ENCODE measurements at regions of chr11 and their contacts with region 1.

Region 1: DNA sequence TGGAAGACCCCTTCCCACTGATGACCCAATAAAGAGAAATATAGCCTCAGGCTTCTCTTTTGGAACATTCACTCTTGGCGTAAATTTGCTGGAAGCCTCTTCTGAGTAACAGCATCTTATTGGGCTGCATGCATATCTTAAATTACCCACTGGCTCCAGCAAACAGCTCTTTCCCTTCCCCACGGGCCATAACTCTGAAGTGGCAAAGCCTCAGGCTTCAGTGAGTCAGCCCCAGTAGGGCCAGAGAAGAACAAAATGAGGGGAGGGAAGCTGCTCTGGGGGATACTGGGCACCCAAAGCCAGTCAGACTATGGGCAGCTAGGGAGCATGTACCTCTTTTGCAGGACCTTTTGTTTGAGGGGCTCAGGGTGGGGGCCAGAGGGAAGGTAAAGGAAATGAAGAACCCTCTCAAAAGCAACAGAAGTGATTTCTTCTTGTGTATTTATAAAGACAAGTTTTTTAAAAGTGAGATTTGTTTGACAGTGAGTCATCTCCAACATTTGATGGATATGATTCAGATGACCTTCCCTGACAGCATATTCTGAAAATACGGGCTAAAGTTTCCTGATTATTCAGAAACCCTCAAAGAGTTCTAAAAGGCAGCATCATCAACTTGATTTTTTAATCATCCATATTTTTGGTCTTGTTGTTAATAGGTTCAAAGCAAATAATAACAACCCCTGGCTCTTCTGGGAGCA is 203.4 kb downstream of the KIF18A start:
- DNase-seq: no peak
- H3K4me3 ChIP-seq: no peak overlapping the region
- H3K27ac ChIP-seq: no peak overlapping the region
- H3K27me3 ChIP-seq: peaks cover 0 to 16% (median 0%) of the 10 kb centered on the region in 45 donors
- CTCF ChIP-seq: no peak

Region 2: GRCh38 chr11:27563201-27563600 is 341.3 kb before region 1 on chr11:
- intact Hi-C with region 1: no loop called
- DNase-seq: no peak
- H3K4me3 ChIP-seq: no peak overlapping the region
- H3K27ac ChIP-seq: no peak overlapping the region
- H3K27me3 ChIP-seq: no peaks in the 10 kb centered on the region
- CTCF ChIP-seq: no peak

Region 3: GRCh38 chr11:27807594-27807993 is 96.9 kb before region 1 on chr11:
- intact Hi-C with region 1: no loop called
- DNase-seq: no peak
- H3K4me3 ChIP-seq: no peak overlapping the region
- H3K27ac ChIP-seq: no peak overlapping the region
- H3K27me3 ChIP-seq: no peaks in the 10 kb centered on the region
- CTCF ChIP-seq: no peak

Region 4: DNA sequence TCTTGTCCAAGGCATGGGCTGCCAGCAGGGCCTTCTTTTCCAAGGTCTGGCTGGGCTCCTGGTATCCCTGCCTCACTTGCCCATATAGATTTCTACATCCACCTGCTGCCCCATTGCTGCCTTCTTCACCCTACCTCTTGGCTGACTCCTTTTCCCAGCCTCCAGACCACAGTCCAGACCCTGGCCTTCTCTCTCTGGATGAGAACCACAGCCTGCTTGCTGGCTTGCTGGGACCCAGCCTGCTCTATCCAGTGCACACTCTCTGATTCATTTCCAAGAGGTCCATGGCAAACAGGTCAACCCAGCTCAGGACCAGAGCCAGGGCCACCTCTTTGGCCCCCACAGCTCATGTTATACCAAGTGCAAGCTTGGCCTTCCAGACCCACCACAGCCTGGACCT is 34.8 kb before region 1 on chr11:
- intact Hi-C with region 1: loop called in 1 of 2 experiments (anchors 1 kb)
- DNase-seq: no peak
- H3K4me3 ChIP-seq: no peak overlapping the region
- H3K27ac ChIP-seq: no peak overlapping the region
- H3K27me3 ChIP-seq: peaks cover 0 to 16% (median 3%) of the 10 kb centered on the region in 45 donors
- CTCF ChIP-seq: no peak

Region 5: DNA sequence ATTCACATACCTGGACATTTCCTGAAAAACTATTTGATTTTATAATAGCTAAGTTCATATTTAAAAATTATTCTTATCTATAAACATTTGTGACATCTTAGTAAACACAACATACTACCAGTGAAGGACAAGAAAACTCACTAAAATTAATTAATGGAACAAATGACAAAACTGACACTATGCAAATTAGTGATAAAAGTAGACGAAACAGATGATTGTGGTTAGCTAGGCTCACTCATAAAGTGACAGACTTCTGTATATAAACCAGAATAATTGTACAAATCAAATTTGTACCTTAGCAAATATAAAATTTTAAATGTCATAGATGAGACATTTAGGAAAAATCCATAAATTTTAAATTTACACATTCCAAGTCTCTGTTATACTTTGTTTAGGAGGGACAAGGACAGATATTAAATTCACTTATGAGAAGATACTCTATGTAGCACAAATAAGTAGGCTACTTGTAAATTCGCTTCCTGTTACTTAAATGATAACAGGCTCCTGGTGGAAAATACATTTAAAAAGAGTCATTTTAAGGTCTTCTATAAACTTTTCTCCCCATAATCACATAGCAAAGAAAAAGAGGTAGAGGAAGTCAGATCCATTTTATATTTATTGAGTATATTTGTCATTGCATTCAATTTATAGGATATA is 122.3 kb after region 1 on chr11:
- intact Hi-C with region 1: no loop called
- DNase-seq: no peak
- H3K4me3 ChIP-seq: no peak overlapping the region
- H3K27ac ChIP-seq: no peak overlapping the region
- H3K27me3 ChIP-seq: no peaks in the 10 kb centered on the region
- CTCF ChIP-seq: no peak

Measured in dorsolateral prefrontal cortex (tissue), 120 donors.